Activated T-helper 1 cell treated with anti-CD3 and anti-CD28 coated beads, Interleukin-12 subunit alpha, Interleukin-12 subunit beta, Interleukin-2, Interleukin-4 antibody, amounts not matched to agents 30 ng/mL and 10 ng/mL and 1 ng/mL, durations not matched to agents 14 hours and 24 hours and 36 hours (primary cell): ENCODE measurements at regions of chr13 and their contacts with region 1.

Region 1: DNA sequence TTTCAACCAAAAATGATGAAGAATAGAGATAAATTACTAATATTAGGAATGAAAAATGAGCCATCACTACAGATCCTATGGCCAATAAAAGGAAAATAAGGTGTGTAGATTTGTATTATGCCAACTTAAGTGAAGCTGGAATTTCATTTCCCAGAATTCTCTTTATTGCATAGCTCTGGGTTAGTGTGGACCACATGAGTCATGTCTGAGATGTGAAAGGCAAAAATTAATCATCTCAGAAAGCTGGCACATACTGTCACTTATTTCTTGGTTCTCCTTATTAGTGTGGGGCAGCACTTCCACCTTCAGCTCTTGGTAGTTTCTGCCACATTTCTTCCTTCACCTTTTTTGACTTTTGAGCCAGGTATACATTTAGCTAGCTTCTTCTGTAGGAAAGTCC is 82.6 kb downstream of the KATNAL1 start:
- DNase-seq: no peak
- H3K4me3 Mint-ChIP-seq: no peak overlapping the region
- H3K27ac Mint-ChIP-seq: peak overlapping the region; percentile 18
- H3K4me1 Mint-ChIP-seq: peaks cover 5% of the 10 kb centered on the region
- H3K27me3 Mint-ChIP-seq: no peaks in the 10 kb centered on the region

Region 2: DNA sequence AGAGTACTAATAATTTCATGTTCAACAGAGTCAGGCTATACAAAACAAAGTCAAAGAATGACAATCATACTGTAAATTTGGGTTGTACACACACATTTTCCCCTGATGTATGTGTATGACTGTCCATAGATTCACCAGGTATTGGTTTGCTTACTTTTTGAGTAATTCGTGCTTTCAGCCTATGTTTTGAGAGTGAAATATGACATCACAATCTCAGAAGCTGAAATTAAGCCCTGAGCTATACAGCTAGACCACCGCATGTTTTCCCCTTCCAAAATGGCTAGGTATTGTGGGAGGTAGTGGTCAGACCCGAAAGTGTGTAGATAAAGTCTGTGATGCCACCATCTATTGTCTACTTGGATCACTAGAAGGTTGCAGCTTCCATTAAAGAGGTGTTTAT is 20.2 kb before region 1 on chr13:
- intact Hi-C with region 1: loop called (anchors 2 kb)
- DNase-seq: no peak
- H3K4me3 Mint-ChIP-seq: no peak overlapping the region
- H3K27ac Mint-ChIP-seq: no peak overlapping the region
- H3K4me1 Mint-ChIP-seq: no peaks in the 10 kb centered on the region
- H3K27me3 Mint-ChIP-seq: peaks cover 1% of the 10 kb centered on the region

Region 3: DNA sequence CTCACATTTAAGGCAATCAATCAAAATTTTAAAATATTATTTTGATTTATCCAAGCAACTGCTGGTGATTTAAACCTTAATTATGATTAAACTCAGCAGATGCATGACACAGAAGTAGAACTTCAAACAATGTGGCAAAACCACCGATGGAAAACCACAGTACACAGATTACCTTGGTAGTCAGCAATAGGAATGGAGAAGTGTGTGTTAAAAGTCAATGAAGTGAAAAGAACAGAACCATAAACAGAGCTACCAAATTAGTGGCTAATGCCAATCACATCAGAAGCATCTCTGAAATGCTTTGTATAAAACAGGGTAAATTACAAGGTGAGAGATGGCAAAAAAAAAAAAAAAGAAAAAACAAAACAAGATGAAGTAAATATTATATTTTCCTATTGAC is 51.4 kb after region 1 on chr13:
- intact Hi-C with region 1: loop called (anchors 2 kb)
- DNase-seq: no peak
- H3K4me3 Mint-ChIP-seq: no peak overlapping the region
- H3K27ac Mint-ChIP-seq: no peak overlapping the region
- H3K4me1 Mint-ChIP-seq: peaks cover 13% of the 10 kb centered on the region
- H3K27me3 Mint-ChIP-seq: no peaks in the 10 kb centered on the region

Region 4: DNA sequence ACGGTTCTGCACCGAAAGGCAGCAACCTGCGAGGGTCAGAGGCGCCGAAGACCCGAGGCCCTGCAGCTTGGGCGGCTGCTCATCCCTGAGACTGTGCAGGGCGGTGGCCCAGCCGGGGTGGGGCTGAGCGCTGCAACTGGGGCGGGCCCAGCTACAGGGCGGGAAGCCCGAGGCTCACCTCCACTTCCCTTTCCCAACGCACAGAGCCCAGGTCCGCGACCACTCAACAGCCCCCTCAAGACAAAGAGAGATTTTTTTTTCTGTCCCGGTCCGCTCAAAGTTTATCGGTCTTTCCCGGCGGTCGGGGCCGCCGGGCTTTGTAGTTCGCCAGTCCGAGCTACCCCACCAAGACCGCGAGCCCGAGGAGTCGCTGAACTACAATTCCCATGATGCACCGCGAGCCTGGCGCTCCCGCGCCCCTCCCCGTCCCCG is 82.0 kb after region 1 on chr13:
- intact Hi-C with region 1: no loop called
- DNase-seq: peak; percentile 90
- H3K4me3 Mint-ChIP-seq: peak overlapping the region; percentile 88
- H3K27ac Mint-ChIP-seq: peak overlapping the region; percentile 84
- H3K4me1 Mint-ChIP-seq: peaks cover 65% of the 10 kb centered on the region
- H3K27me3 Mint-ChIP-seq: no peaks in the 10 kb centered on the region

Region 5: GRCh38 chr13:30429721-30430694 is 205.3 kb after region 1 on chr13:
- intact Hi-C with region 1: loop called (anchors 1 kb)
- DNase-seq: no peak
- H3K4me3 Mint-ChIP-seq: peak overlapping the region; percentile 75
- H3K27ac Mint-ChIP-seq: peak overlapping the region; percentile 97
- H3K4me1 Mint-ChIP-seq: peaks cover 29% of the 10 kb centered on the region
- H3K27me3 Mint-ChIP-seq: peaks cover 6% of the 10 kb centered on the region